Activated naive CD4-positive, alpha-beta T cell treated with anti-CD3 and anti-CD28 coated beads for 36 hours (primary cell): ENCODE measurements at regions of chr1 and their contacts with region 1.

Region 1: GRCh38 chr1:42681741-42682483 is at the start of gene YBX1:
- DNase-seq: peak; percentile 97
- H3K4me3 Mint-ChIP-seq: peak within 1 kb of the TSS; percentile 97
- H3K27ac Mint-ChIP-seq: peak within 1 kb of the TSS; percentile 97
- H3K4me1 Mint-ChIP-seq: peaks cover 42% of the 10 kb centered on the region
- H3K27me3 Mint-ChIP-seq: no peaks in the 10 kb centered on the region
- total RNA-seq, gene YBX1: 1,773 to 1,887 TPM

Region 2: DNA sequence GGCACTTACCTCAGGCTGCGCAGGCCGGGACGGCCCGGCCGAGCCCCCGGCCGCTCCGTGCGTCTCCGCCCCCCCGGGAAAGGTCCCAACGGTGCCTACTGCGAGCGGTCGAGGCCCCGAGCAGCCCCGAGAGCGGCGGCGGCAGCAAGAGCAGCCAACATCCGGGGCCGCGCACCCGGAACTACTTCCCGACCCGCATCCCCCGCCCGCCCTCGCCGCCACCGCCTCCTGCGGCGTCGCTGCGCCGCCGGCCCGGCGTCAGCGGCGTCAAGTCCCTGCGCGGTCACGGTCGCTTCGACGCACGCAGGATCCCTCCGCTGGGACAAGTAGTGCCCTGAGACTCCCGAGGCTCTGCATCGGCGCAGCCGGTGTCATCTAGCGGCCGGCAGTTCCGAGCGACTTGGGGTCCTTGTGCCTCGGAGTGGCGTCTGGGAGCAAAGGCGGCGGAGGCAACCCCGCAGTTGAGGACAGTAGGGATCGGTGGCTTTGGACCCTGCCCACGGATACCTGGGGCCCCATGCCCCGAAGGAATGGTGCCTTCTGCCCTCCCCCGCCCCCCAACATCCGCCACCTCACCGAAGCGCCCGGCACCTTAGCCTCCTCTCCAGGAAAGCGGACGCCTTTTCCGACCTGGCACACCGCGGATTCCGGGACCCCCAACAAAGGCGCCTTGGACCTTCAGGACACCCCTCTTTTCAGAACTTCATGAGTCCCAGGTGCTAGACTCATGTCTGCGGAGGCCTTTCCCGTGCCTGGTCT is 346.7 kb before region 1 on chr1 and contains the start of gene FOXJ3:
- CTCF ChIA-PET with region 1: no interaction called
- intact Hi-C with region 1: loop called (anchors 2 kb)
- DNase-seq: peak; percentile 93
- H3K4me3 Mint-ChIP-seq: peak within 1 kb of the TSS; percentile 92
- H3K27ac Mint-ChIP-seq: peak within 1 kb of the TSS; percentile 88
- H3K4me1 Mint-ChIP-seq: peaks cover 39% of the 10 kb centered on the region
- H3K27me3 Mint-ChIP-seq: no peaks in the 10 kb centered on the region
- total RNA-seq, gene FOXJ3: 35.6 to 37.2 TPM

Region 3: DNA sequence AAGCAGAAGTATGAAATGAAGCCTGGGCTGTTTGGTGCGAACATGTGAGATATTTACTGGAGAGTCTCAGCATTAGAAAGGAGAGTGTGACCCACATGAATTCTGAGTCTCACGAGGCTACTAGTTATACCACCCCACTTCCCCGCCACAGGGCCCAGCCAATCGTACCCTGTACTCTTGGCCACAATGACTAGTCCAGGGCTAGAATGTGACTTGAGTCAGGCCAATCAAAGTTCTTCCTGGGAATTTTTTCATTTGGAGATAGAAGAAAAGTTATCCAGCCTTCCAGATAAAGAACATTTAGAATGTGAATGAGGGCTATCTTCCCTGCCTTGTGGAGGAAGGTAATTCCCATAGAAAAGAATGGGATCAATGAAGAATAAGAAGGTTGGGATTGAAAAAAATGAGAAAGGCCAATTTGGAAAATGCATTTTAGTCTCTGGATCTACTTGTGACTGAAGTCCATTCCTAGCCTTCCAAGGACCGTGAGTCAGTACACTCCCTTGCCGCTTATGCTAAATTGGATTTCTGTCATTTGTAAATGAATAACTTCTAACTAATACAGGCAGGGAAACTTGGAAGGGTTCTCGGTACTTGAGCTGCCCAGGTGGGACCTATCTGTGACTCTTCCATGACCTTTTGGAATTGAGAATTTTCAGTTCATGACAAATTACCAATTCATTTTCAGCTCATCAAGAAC is 313.7 kb before region 1 on chr1:
- CTCF ChIA-PET with region 1: no interaction called
- intact Hi-C with region 1: no loop called
- DNase-seq: no peak
- H3K4me3 Mint-ChIP-seq: no peak overlapping the region
- H3K27ac Mint-ChIP-seq: no peak overlapping the region
- H3K4me1 Mint-ChIP-seq: no peaks in the 10 kb centered on the region
- H3K27me3 Mint-ChIP-seq: no peaks in the 10 kb centered on the region

Region 4: DNA sequence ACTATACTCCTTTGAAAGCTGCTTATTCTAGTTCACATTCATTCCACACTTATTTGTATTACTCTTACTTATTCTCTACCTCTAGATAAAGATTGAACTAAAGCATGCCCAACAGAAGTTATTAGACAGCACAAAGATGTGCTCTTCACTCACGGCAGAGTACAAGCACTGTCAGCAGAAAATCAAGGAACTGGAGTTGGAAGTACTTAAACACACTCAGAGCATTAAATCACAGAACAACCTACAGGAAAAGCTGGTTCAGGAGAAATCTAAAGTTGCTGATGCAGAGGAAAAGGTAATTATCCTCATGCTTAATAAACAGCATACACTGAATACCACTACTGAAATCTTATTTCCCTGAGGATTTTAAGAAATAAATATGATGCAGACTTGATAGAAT is 105.0 kb before region 1 on chr1:
- CTCF ChIA-PET with region 1: interaction called, 3 read pairs
- intact Hi-C with region 1: loop called (anchors 1 kb)
- DNase-seq: no peak
- H3K4me3 Mint-ChIP-seq: no peak overlapping the region
- H3K27ac Mint-ChIP-seq: no peak overlapping the region
- H3K4me1 Mint-ChIP-seq: no peaks in the 10 kb centered on the region
- H3K27me3 Mint-ChIP-seq: no peaks in the 10 kb centered on the region

Region 5: DNA sequence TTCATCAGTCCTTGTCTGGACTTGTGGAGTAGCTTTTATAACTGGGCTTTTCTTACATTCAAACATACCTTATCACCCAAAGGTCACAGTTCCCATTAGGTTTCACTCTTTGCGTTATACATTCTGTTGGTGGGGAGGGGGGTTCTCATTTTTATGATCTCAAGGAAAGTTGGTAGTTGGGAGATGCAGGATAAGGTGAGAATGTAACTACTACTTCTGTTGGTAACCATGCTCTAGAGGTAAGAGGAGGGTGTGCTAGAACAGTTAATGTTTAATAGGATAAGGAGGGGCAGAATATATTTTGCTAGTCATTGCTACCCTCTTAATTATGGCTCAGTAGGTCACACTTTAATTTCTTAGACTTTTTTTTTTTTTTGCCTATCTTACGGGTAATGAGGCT is 11.0 kb after region 1 on chr1:
- CTCF ChIA-PET with region 1: no interaction called
- intact Hi-C with region 1: loop called (anchors 1 kb)
- DNase-seq: no peak
- H3K4me3 Mint-ChIP-seq: no peak overlapping the region
- H3K27ac Mint-ChIP-seq: peak overlapping the region; percentile 63
- H3K4me1 Mint-ChIP-seq: peaks cover 68% of the 10 kb centered on the region
- H3K27me3 Mint-ChIP-seq: no peaks in the 10 kb centered on the region

Region 6: DNA sequence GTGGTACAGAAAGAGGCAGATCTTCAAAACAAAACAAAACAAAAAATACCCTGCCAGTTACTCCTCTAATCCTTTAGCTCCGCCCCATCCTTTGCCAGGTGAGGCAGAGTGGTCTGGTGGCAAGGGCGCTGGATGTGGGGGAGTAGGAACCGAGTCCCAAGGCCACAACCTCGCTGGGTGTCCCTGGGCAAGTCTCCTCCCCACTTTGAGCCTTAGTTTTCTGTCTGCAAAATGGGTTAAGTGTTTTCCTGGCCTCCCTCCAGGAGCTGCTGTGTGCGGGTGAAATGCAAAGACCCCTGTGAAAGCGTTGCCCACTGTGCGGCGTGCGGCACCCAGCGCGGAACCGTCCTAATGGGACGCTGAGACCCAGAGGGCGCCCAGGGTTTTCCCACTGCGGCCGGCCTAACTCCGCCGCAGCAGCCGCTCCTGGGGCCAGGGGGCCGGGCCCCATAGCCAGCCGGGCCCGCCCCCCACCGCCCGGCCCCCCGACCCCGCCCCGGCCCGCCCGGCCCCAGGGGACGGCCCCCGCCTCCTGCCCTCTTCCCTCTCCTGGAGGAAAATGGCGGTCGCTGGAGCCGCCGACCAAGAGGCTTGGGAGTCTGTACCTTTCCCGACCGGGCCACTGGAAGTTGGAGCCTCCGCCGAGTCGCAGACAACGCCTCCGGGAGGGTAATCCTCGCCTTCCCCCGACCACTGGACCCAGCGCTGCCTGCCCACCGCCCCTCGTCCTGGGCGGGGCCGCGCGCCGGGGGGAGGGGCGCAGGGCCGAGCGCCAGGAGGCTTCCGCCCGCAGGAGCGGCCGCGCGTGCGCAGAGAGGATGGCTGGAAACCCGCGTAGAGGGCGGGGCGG is 134.9 kb after region 1 on chr1 and contains the starts of genes ERMAP and SVBP:
- CTCF ChIA-PET with region 1: no interaction called
- intact Hi-C with region 1: loop called (anchors 1 kb)
- DNase-seq: peak; percentile 95
- H3K4me3 Mint-ChIP-seq: peak within 1 kb of the TSS; percentile 76
- H3K27ac Mint-ChIP-seq: peak within 1 kb of the TSS; percentile 77
- H3K4me1 Mint-ChIP-seq: peaks cover 17% of the 10 kb centered on the region
- H3K27me3 Mint-ChIP-seq: no peaks in the 10 kb centered on the region
- total RNA-seq, gene ERMAP: 3.1 TPM
- total RNA-seq, gene SVBP: 16.4 to 17.0 TPM

Region 7: DNA sequence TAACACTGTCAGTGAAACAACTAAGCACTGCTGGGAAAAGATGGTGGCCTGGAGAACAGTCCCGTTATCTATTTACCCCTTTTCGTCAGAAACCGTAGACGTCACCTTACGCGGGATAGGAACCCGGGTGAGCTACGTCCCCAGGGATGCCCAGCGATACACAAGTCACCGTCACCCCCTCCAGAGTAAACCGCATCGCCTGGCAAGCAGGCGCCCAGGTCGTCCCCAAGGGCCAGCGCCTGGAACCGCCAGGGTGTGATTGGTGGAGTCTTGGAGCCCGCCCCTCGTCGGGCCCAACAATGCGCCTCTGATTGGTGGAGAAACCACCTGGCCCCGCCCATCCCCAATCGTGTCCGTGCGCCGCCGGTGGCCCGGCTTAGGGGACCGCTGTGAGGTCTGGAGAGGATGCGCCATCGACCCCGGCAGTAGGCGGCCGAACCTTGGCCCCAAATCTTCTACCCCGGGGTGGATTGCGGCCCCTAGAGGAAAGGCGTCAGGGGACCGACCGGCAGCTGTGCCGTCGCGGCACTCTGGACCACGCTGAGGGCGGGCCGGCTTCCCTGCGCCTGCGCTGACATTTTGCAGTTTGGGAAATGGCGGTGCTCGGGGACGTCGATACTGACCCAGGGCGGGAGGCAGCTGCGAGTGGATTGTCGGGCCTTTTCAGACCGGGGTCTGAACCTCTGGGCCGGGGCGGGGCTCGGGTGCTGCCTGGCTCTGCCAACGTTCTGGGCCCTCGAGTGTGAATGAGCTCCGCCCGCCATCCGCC is 242.4 kb after region 1 on chr1:
- CTCF ChIA-PET with region 1: no interaction called
- intact Hi-C with region 1: loop called (anchors 5 kb)
- DNase-seq: peak; percentile 95
- H3K4me3 Mint-ChIP-seq: peak overlapping the region; percentile 92
- H3K27ac Mint-ChIP-seq: peak overlapping the region; percentile 88
- H3K4me1 Mint-ChIP-seq: peaks cover 23% of the 10 kb centered on the region
- H3K27me3 Mint-ChIP-seq: no peaks in the 10 kb centered on the region